Activated B cell treated with CpG ODN at 0.5 μM for 24 hours (primary cell): ENCODE measurements at regions of chr12 and their contacts with region 1.

Region 1: GRCh38 chr12:92987362-92987761 is 58.3 kb upstream of the EEA1 start:
- DNase-seq: no peak
- ATAC-seq: peak; percentile 26
- H3K4me3 Mint-ChIP-seq: peak overlapping the region; percentile 69
- H3K27ac Mint-ChIP-seq: peak overlapping the region; percentile 89
- H3K4me1 Mint-ChIP-seq: peaks cover 33% of the 10 kb centered on the region
- H3K27me3 Mint-ChIP-seq: no peaks in the 10 kb centered on the region
- CTCF ChIP-seq: peak; percentile 93

Region 2: GRCh38 chr12:92827836-92828431 is 159.4 kb before region 1 on chr12:
- CTCF ChIA-PET with region 1: no interaction called
- POLR2A ChIA-PET with region 1: no interaction called
- intact Hi-C with region 1: loop called (anchors 5 kb)
- DNase-seq: no peak
- ATAC-seq: no peak
- H3K4me3 Mint-ChIP-seq: no peak overlapping the region
- H3K27ac Mint-ChIP-seq: no peak overlapping the region
- H3K4me1 Mint-ChIP-seq: no peaks in the 10 kb centered on the region
- H3K27me3 Mint-ChIP-seq: no peaks in the 10 kb centered on the region
- CTCF ChIP-seq: no peak

Region 3: GRCh38 chr12:92973601-92974000 is 13.8 kb before region 1 on chr12:
- CTCF ChIA-PET with region 1: interaction called, 28 read pairs
- POLR2A ChIA-PET with region 1: interaction called, 5 read pairs
- intact Hi-C with region 1: loop called (anchors 1 kb)
- DNase-seq: no peak
- ATAC-seq: no peak
- H3K4me3 Mint-ChIP-seq: no peak overlapping the region
- H3K27ac Mint-ChIP-seq: peak overlapping the region; percentile 62
- H3K4me1 Mint-ChIP-seq: peaks cover 58% of the 10 kb centered on the region
- H3K27me3 Mint-ChIP-seq: no peaks in the 10 kb centered on the region
- CTCF ChIP-seq: no peak

Region 4: GRCh38 chr12:93050026-93050747 is 62.8 kb after region 1 on chr12:
- CTCF ChIA-PET with region 1: no interaction called
- POLR2A ChIA-PET with region 1: no interaction called
- intact Hi-C with region 1: no loop called
- DNase-seq: no peak
- ATAC-seq: no peak
- H3K4me3 Mint-ChIP-seq: no peak overlapping the region
- H3K27ac Mint-ChIP-seq: no peak overlapping the region
- H3K4me1 Mint-ChIP-seq: no peaks in the 10 kb centered on the region
- H3K27me3 Mint-ChIP-seq: no peaks in the 10 kb centered on the region
- CTCF ChIP-seq: no peak

Region 5: GRCh38 chr12:93137656-93138612 is 150.6 kb after region 1 on chr12:
- CTCF ChIA-PET with region 1: interaction called, 4 read pairs
- POLR2A ChIA-PET with region 1: interaction called, 3 read pairs
- intact Hi-C with region 1: loop called (anchors 5 kb)
- DNase-seq: no peak
- ATAC-seq: peak; percentile 40
- H3K4me3 Mint-ChIP-seq: peak overlapping the region; percentile 13
- H3K27ac Mint-ChIP-seq: peak overlapping the region; percentile 85
- H3K4me1 Mint-ChIP-seq: peaks cover 62% of the 10 kb centered on the region
- H3K27me3 Mint-ChIP-seq: no peaks in the 10 kb centered on the region
- CTCF ChIP-seq: no peak

Region 6: DNA sequence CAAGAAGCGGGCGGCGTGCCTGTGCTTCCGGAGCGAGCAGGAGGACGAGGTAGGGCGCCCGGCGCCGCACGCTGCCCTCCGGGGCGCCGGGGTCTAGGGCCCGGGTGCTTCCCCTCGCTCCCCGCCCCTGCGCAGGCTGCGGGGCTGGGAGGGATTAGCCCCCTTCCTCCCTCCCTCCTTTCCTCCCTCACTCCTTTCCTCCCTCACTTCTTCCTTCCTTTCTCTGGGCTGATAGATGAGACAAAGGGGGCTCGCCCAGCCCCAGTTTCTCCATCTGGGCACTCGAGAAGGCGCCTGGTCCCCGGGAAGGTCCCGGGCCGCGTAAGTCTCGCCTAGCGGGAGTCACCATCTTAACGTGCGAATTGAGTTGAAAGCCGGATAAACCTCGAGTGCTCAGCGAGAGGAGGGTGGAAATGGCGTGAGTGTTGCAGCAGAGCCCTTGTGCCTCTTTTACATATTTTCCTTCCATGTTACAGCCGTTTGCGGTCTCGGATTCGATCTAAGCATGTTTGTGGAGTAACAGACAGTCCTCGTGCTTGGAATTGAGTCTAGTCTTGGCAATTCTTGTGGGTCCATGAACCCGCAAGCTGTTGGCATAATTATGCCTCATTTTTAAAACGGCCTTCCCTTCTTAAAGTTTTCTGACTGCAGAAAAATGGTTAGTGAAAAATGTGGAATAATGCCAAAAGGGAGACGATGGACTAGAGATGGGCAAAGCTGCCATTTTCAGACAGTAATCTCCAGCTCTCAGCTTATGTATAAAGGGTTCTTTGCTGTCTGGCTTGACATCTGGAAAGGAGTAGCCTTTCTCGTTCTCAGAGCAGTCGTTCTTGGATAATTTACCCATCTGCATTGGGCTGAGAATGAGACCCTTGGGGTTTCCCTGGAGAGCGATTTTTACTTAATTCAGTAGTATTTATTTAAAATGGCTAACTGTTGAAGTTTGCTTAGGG is 391.3 kb after region 1 on chr12:
- CTCF ChIA-PET with region 1: interaction called, 45 read pairs
- POLR2A ChIA-PET with region 1: interaction called, 4 read pairs
- intact Hi-C with region 1: loop called (anchors 1 kb)
- DNase-seq: peak; percentile 57
- ATAC-seq: peak; percentile 40
- H3K4me3 Mint-ChIP-seq: peak overlapping the region; percentile 100
- H3K27ac Mint-ChIP-seq: peak overlapping the region; percentile 100
- H3K4me1 Mint-ChIP-seq: peaks cover 41% of the 10 kb centered on the region
- H3K27me3 Mint-ChIP-seq: no peaks in the 10 kb centered on the region
- CTCF ChIP-seq: no peak

Region 7: GRCh38 chr12:93419388-93420034 is 432.1 kb after region 1 on chr12:
- CTCF ChIA-PET with region 1: interaction called, 54 read pairs
- POLR2A ChIA-PET with region 1: interaction called, 6 read pairs
- intact Hi-C with region 1: loop called (anchors 1 kb)
- DNase-seq: no peak
- ATAC-seq: peak; percentile 56
- H3K4me3 Mint-ChIP-seq: no peak overlapping the region
- H3K27ac Mint-ChIP-seq: peak overlapping the region; percentile 31
- H3K4me1 Mint-ChIP-seq: peaks cover 87% of the 10 kb centered on the region
- H3K27me3 Mint-ChIP-seq: no peaks in the 10 kb centered on the region
- CTCF ChIP-seq: peak; percentile 68

Region 8: DNA sequence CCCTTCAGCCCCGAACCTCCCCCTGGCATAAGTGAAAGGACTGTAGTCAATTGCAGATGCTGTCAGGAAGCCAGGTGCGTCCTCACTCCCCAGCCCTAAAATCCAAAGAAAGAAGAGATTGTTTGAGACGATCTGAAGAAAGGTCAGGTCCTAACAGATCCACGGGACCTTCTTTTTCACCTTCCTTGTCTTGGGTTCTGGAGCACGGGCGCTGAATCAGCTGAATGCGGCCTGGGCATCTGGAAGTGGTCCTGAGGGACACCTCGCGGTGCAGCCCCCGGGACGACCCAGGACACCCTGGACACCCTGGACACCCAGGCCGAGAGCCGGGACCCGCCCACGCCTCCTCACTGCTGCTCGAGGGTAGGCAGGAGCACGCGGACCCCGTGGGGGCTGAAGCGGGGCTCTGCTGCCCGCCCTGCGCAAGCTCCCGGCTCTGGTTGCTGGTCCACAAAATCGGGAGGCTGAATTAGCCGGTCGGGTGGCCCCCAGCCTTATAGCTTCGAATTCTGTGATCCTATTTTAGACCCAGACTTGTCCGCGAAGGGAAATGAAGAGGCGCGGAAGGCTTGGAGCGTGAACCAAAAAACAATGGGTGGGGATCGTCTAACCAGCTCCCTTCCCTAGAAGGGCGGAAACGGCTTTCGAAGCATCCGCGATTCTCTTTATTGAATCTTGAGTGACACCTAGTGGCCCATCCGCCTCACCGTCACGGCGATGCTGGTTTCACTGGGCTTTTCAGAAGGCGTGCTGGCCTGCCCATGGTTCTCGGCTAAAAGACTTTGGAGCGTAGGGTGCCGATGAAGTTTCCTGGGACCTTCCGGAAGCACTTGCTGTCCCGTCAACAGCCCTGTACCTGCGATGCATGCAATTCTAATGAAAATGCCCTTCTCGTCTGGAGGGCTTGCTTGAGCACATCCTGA is 1114.6 kb after region 1 on chr12:
- CTCF ChIA-PET with region 1: interaction called, 41 read pairs
- POLR2A ChIA-PET with region 1: interaction called, 7 read pairs
- intact Hi-C with region 1: loop called (anchors 1 kb)
- DNase-seq: peak; percentile 64
- ATAC-seq: peak; percentile 87
- H3K4me3 Mint-ChIP-seq: peak overlapping the region; percentile 83
- H3K27ac Mint-ChIP-seq: no peak overlapping the region
- H3K4me1 Mint-ChIP-seq: peaks cover 6% of the 10 kb centered on the region
- H3K27me3 Mint-ChIP-seq: peaks cover 54% of the 10 kb centered on the region
- CTCF ChIP-seq: peak; percentile 34